IMR-90 (cell line): ENCODE measurements at regions of chr4 and their contacts with region 1.

Region 1: GRCh38 chr4:121950212-121950679 is 1.6 kb downstream of the TRPC3 start:
- DNase-seq: peak; percentile 69
- ATAC-seq: peak; percentile 85
- H3K4me3 ChIP-seq: peak overlapping the region; percentile 76
- H3K27ac ChIP-seq: no peak overlapping the region
- H3K4me1 ChIP-seq: no peaks in the 10 kb centered on the region
- H3K27me3 ChIP-seq: no peaks in the 10 kb centered on the region
- CTCF ChIP-seq: peak; percentile 79
- POLR2A ChIP-seq: no peak
- RAD21 ChIP-seq: peak; percentile 78

Region 2: GRCh38 chr4:122003335-122003734 is 53.1 kb after region 1 on chr4:
- CTCF ChIA-PET with region 1: interaction called, 3 read pairs
- POLR2A ChIA-PET with region 1: no interaction called
- dilution Hi-C with region 1: no loop called
- in situ Hi-C with region 1: no loop called
- intact Hi-C with region 1: loop called (anchors 5 kb)
- DNase-seq: no peak
- ATAC-seq: no peak
- H3K4me3 ChIP-seq: no peak overlapping the region
- H3K27ac ChIP-seq: no peak overlapping the region
- H3K4me1 ChIP-seq: peaks cover 8% of the 10 kb centered on the region
- H3K27me3 ChIP-seq: no peaks in the 10 kb centered on the region
- CTCF ChIP-seq: peak; percentile 18; the same call in 1 of the 2 replicates
- POLR2A ChIP-seq: no peak
- RAD21 ChIP-seq: no peak

Region 3: GRCh38 chr4:122099896-122100295 is 149.7 kb after region 1 on chr4:
- CTCF ChIA-PET with region 1: no interaction called
- POLR2A ChIA-PET with region 1: no interaction called
- dilution Hi-C with region 1: no loop called
- in situ Hi-C with region 1: no loop called
- intact Hi-C with region 1: loop called (anchors 5 kb)
- DNase-seq: peak; percentile 89
- ATAC-seq: peak; percentile 87
- H3K4me3 ChIP-seq: no peak overlapping the region
- H3K27ac ChIP-seq: no peak overlapping the region
- H3K4me1 ChIP-seq: peaks cover 7% of the 10 kb centered on the region
- H3K27me3 ChIP-seq: no peaks in the 10 kb centered on the region
- CTCF ChIP-seq: no peak
- POLR2A ChIP-seq: no peak
- RAD21 ChIP-seq: no peak

Region 4: GRCh38 chr4:122151982-122152710 is 201.9 kb after region 1 on chr4 and contains the start of gene BLTP1:
- CTCF ChIA-PET with region 1: no interaction called
- POLR2A ChIA-PET with region 1: no interaction called
- dilution Hi-C with region 1: no loop called
- in situ Hi-C with region 1: no loop called
- intact Hi-C with region 1: loop called (anchors 1 kb)
- DNase-seq: peak; percentile 75
- ATAC-seq: peak; percentile 99
- H3K4me3 ChIP-seq: peak within 1 kb of the TSS; percentile 91
- H3K27ac ChIP-seq: peak within 1 kb of the TSS; percentile 81
- H3K4me1 ChIP-seq: no peaks in the 10 kb centered on the region
- H3K27me3 ChIP-seq: no peaks in the 10 kb centered on the region
- CTCF ChIP-seq: no peak
- POLR2A ChIP-seq: no peak
- RAD21 ChIP-seq: 0 out of 2 replicates have a peak, but pooled peaks have one; percentile 9
- total RNA-seq, gene BLTP1: 92.7 and 111 TPM in 2 replicates

Region 5: DNA sequence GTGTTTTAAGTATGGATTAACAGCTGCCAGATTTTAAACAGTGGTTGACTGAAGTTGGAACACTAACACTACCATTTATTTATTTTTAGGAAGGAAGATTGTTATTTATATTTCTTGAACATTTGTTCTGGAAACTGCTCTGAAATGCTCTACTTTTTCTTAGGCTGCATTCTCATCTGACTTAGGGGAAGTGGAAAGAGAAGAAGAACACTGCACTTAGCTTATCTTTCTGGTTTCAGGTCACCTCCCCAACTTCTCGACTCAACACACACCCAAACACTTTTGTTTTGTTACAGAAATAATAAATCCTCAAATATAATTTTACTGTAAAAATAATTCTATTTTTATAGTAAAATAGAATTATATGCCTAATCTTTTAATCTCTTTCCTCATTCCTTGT is 220.5 kb after region 1 on chr4:
- CTCF ChIA-PET with region 1: no interaction called
- POLR2A ChIA-PET with region 1: no interaction called
- dilution Hi-C with region 1: no loop called
- in situ Hi-C with region 1: no loop called
- intact Hi-C with region 1: loop called (anchors 5 kb)
- DNase-seq: no peak
- ATAC-seq: no peak
- H3K4me3 ChIP-seq: no peak overlapping the region
- H3K27ac ChIP-seq: no peak overlapping the region
- H3K4me1 ChIP-seq: peaks cover 4% of the 10 kb centered on the region; the same call in 1 of the 2 replicates
- H3K27me3 ChIP-seq: no peaks in the 10 kb centered on the region
- CTCF ChIP-seq: no peak
- POLR2A ChIP-seq: no peak
- RAD21 ChIP-seq: no peak

Region 6: DNA sequence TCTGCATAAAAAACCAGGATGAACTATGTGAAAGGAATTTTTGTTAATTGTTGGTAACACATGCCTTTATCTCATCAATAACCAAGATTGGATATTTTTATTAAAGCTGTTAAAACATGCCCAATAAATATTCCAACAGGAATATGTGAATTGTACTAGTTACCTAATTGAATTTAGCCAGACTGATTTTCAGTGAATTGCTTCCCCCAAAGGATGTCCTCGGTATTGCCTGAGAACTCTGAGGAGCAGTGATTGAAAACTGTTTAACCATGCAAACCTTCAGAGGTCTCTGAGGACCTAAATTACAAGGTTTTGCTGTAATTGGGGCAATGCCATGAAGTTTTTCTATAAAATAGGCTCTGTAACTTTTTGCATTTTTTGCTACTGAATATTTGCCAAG is 268.5 kb after region 1 on chr4:
- CTCF ChIA-PET with region 1: no interaction called
- POLR2A ChIA-PET with region 1: no interaction called
- dilution Hi-C with region 1: no loop called
- in situ Hi-C with region 1: no loop called
- intact Hi-C with region 1: loop called (anchors 1 kb)
- DNase-seq: peak; percentile 7
- ATAC-seq: no peak
- H3K4me3 ChIP-seq: no peak overlapping the region
- H3K27ac ChIP-seq: no peak overlapping the region
- H3K4me1 ChIP-seq: no peaks in the 10 kb centered on the region
- H3K27me3 ChIP-seq: no peaks in the 10 kb centered on the region
- CTCF ChIP-seq: peak; percentile 42
- POLR2A ChIP-seq: no peak
- RAD21 ChIP-seq: peak; percentile 52